CD8-positive, alpha-beta memory T cell (primary cell): ENCODE measurements at regions of chr6 and their contacts with region 1.

Region 1: DNA sequence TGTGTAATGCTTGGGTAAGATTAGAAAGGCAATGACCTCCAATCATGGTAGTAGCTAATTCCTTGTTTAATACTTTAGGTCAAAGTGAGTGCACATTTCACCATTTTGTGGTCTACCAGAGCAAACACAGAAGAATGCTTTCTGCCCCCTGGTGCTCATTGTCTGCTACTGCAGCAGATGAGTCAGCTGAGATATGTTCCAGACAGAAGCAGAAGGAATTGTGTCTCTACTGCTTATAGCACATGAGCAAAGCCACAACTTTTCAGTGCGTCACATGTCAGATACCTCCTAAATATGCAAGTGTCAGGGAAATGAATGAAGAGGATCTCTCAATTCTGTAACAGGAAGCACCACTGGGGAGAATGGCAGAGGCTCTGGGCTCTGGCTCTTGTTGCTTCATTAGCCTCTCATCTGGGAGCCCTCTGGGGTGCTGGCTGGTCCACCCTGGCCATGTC is 308.9 kb downstream of the ALDH8A1 start:
- DNase-seq: peak; percentile 45 to 83 (median 64)
- H3K4me3 ChIP-seq: no peak overlapping the region
- H3K4me3 Mint-ChIP-seq: no peak overlapping the region
- H3K27ac ChIP-seq: no peak overlapping the region
- H3K27ac Mint-ChIP-seq: peak overlapping the region in 1 of 8 donors; percentile 1
- H3K4me1 ChIP-seq: peaks cover 7% of the 10 kb centered on the region
- H3K4me1 Mint-ChIP-seq: peaks cover 5 to 17% (median 12%) of the 10 kb centered on the region in 3 donors
- H3K27me3 ChIP-seq: no peaks in the 10 kb centered on the region
- H3K27me3 Mint-ChIP-seq: no peaks in the 10 kb centered on the region

Region 2: GRCh38 chr6:134161036-134161435 is 480.0 kb before region 1 on chr6:
- CTCF ChIA-PET with region 1: interaction called, 24 read pairs
- POLR2A ChIA-PET with region 1: no interaction called
- DNase-seq: no peak
- H3K4me3 ChIP-seq: no peak overlapping the region
- H3K4me3 Mint-ChIP-seq: no peak overlapping the region
- H3K27ac ChIP-seq: no peak overlapping the region
- H3K27ac Mint-ChIP-seq: no peak overlapping the region
- H3K4me1 ChIP-seq: no peaks in the 10 kb centered on the region
- H3K4me1 Mint-ChIP-seq: no peaks in the 10 kb centered on the region
- H3K27me3 ChIP-seq: no peaks in the 10 kb centered on the region
- H3K27me3 Mint-ChIP-seq: peaks cover 0 to 9% of the 10 kb centered on the region in 2 donors

Region 3: DNA sequence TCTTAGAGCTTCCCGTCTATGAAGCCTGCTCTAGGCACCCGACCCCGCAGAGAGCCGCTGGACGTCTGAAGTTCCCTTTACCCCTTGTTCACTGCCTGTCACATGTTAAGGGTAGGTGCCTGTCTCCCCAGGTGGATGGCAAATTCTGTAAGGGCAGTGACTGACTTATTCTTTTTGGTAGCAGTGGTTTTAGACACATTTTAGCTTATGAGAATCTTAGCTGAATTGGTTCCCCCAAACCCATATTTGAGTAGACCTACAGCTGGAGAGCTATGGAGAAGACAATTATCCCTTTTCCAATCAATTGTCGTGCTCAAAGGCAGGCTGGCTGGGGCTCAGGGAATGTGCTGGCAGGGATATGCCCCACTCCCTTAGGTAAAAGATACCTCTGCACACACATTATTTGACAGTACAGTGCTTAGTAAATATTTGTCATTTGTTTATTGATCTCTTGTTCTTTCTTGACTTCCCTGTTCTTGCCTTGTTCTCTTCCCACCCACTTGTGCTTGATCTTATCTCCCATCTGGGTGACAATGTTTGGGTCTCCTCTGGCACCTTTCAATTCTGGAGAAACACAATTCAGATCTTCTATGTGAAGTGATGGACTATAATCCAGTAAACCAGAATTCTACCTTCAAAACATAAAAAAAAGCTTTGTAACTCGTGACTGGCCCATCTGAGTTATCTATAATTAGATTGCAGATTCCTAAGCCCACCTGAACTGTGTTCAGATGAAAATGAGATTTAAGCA is 474.3 kb before region 1 on chr6:
- CTCF ChIA-PET with region 1: interaction called, 31 read pairs
- POLR2A ChIA-PET with region 1: no interaction called
- DNase-seq: no peak
- H3K4me3 ChIP-seq: no peak overlapping the region
- H3K4me3 Mint-ChIP-seq: no peak overlapping the region
- H3K27ac ChIP-seq: no peak overlapping the region
- H3K27ac Mint-ChIP-seq: peak overlapping the region in 1 of 8 donors; percentile 6
- H3K4me1 ChIP-seq: peaks cover 5% of the 10 kb centered on the region
- H3K4me1 Mint-ChIP-seq: peaks cover 15 to 21% (median 17%) of the 10 kb centered on the region in 3 donors
- H3K27me3 ChIP-seq: no peaks in the 10 kb centered on the region
- H3K27me3 Mint-ChIP-seq: peaks cover 0 to 3% of the 10 kb centered on the region in 2 donors

Region 4: GRCh38 chr6:134174672-134175198 is 466.3 kb before region 1 on chr6:
- CTCF ChIA-PET with region 1: interaction called, 54 read pairs
- POLR2A ChIA-PET with region 1: interaction called, 7 read pairs
- DNase-seq: peak; percentile 88 to 93 (median 89)
- H3K4me3 ChIP-seq: peak overlapping the region; percentile 81
- H3K4me3 Mint-ChIP-seq: peak overlapping the region; percentile 90 to 98 (median 95)
- H3K27ac ChIP-seq: peak overlapping the region; percentile 71
- H3K27ac Mint-ChIP-seq: peak overlapping the region; percentile 88 to 97 (median 94)
- H3K4me1 ChIP-seq: peaks cover 42% of the 10 kb centered on the region
- H3K4me1 Mint-ChIP-seq: peaks cover 54 to 72% (median 72%) of the 10 kb centered on the region in 3 donors
- H3K27me3 ChIP-seq: no peaks in the 10 kb centered on the region
- H3K27me3 Mint-ChIP-seq: no peaks in the 10 kb centered on the region

Region 5: GRCh38 chr6:134822920-134823709 is 182.1 kb after region 1 on chr6:
- CTCF ChIA-PET with region 1: interaction called, 12 read pairs
- POLR2A ChIA-PET with region 1: no interaction called
- DNase-seq: peak in 3 of 5 donors; percentile 2 to 44 (median 38)
- H3K4me3 ChIP-seq: no peak overlapping the region
- H3K4me3 Mint-ChIP-seq: no peak overlapping the region
- H3K27ac ChIP-seq: no peak overlapping the region
- H3K27ac Mint-ChIP-seq: no peak overlapping the region
- H3K4me1 ChIP-seq: no peaks in the 10 kb centered on the region
- H3K4me1 Mint-ChIP-seq: peaks cover 0 to 3% (median 3%) of the 10 kb centered on the region in 3 donors
- H3K27me3 ChIP-seq: no peaks in the 10 kb centered on the region
- H3K27me3 Mint-ChIP-seq: peaks cover 3 to 13% of the 10 kb centered on the region in 2 donors

Region 6: GRCh38 chr6:134938896-134939295 is 297.9 kb after region 1 on chr6:
- CTCF ChIA-PET with region 1: interaction called, 13 read pairs
- POLR2A ChIA-PET with region 1: no interaction called
- DNase-seq: peak in 2 of 5 donors; percentile 6 to 18
- H3K4me3 ChIP-seq: no peak overlapping the region
- H3K4me3 Mint-ChIP-seq: no peak overlapping the region
- H3K27ac ChIP-seq: no peak overlapping the region
- H3K27ac Mint-ChIP-seq: no peak overlapping the region
- H3K4me1 ChIP-seq: peaks cover 5% of the 10 kb centered on the region
- H3K4me1 Mint-ChIP-seq: peaks cover 0 to 3% (median 2%) of the 10 kb centered on the region in 3 donors
- H3K27me3 ChIP-seq: no peaks in the 10 kb centered on the region
- H3K27me3 Mint-ChIP-seq: no peaks in the 10 kb centered on the region